ENCODE measurements at regions of chr14 and their contacts with region 1.

Region 1: GRCh38 chr14:70086685-70087379 is 101.9 kb downstream of the SLC8A3 start:
- DNase-seq: no peak
- ATAC-seq: no peak
- H3K4me3 Mint-ChIP-seq: no peak overlapping the region
- H3K27ac Mint-ChIP-seq: no peak overlapping the region
- H3K4me1 Mint-ChIP-seq: no peaks in the 10 kb centered on the region
- H3K27me3 Mint-ChIP-seq: peaks cover 11% of the 10 kb centered on the region
- CTCF ChIP-seq: no peak

Region 2: GRCh38 chr14:68926236-68926635 is 1160.6 kb before region 1 on chr14:
- CTCF ChIA-PET with region 1: no interaction called
- POLR2A ChIA-PET with region 1: no interaction called
- intact Hi-C with region 1: no loop called
- DNase-seq: no peak
- ATAC-seq: no peak
- H3K4me3 Mint-ChIP-seq: no peak overlapping the region
- H3K27ac Mint-ChIP-seq: no peak overlapping the region
- H3K4me1 Mint-ChIP-seq: no peaks in the 10 kb centered on the region
- H3K27me3 Mint-ChIP-seq: peaks cover 33% of the 10 kb centered on the region
- CTCF ChIP-seq: no peak

Region 3: DNA sequence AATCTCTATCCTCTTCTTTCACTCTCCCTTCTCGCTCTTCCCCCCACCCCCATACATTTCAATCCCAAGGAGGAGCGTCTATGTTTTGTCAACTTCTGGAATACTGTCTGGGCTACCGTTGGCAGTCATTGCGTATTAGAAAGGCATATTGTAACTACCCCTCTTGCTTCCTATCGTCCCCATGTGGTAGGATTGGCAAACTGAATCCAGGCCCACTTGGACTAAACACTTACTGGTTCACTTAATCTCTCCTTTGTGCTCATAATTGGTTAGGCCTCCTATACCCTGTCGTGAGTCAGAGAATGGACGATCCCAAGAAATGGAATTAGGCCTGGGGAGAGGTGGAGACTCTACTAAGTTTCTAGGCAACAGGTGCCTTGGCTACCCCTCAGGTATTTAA is 170.7 kb after region 1 on chr14:
- CTCF ChIA-PET with region 1: interaction called, 5 read pairs
- POLR2A ChIA-PET with region 1: no interaction called
- intact Hi-C with region 1: loop called (anchors 1 kb)
- DNase-seq: no peak
- ATAC-seq: no peak
- H3K4me3 Mint-ChIP-seq: no peak overlapping the region
- H3K27ac Mint-ChIP-seq: no peak overlapping the region
- H3K4me1 Mint-ChIP-seq: peaks cover 4% of the 10 kb centered on the region
- H3K27me3 Mint-ChIP-seq: peaks cover 44% of the 10 kb centered on the region
- CTCF ChIP-seq: no peak

Region 4: DNA sequence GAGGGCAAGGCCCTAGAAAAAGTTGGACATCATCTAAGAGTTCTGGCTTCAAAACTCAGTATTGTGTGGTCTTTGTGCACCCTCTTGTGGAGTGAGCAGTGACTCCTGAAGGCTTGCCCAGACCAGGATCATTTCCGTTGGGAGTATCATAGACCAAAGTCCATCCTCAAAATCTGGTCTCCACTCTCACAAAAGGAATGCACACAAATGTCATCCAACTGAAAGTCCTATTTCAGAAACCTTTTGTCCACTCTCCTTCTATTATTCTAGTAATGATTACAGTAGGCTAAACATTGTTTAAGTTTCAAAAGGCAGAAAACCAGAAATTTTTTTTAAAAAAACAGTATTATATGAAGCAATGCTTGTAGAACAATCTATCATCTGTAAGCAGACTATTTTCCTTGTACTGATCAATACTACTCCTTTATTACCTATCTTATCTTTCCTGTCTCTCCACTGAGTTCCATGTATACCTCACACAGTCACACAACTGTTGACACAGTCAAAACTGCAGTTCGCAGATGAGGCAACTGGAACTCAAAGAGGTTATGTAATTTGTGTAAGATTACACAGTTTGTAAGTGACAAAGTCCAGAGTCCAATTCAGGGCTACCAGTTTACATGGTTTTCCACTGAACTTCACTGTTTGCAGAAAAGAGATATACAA is 231.3 kb after region 1 on chr14:
- CTCF ChIA-PET with region 1: interaction called, 3 read pairs
- POLR2A ChIA-PET with region 1: no interaction called
- intact Hi-C with region 1: loop called (anchors 2 kb)
- DNase-seq: no peak
- ATAC-seq: no peak
- H3K4me3 Mint-ChIP-seq: no peak overlapping the region
- H3K27ac Mint-ChIP-seq: no peak overlapping the region
- H3K4me1 Mint-ChIP-seq: no peaks in the 10 kb centered on the region
- H3K27me3 Mint-ChIP-seq: peaks cover 12% of the 10 kb centered on the region
- CTCF ChIP-seq: no peak

Region 5: DNA sequence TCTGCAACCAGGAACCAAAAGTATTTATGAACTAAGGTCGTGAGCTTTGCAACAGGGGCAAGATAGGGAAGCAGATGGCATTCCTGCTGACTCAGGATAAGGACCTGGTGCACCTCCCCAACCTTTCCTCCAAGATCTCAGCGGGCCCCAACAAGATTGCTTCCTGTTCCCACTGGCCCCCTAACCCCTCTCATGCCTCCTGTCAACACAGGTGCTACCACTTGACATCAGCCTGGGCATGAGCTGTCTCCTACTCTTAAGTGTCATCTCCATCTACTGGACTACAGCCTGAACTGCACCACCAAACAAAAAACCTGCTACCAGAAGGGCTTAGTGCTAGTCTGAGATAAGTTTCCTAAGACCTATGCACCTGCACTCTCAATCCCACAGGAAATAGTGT is 481.0 kb after region 1 on chr14:
- CTCF ChIA-PET with region 1: no interaction called
- POLR2A ChIA-PET with region 1: no interaction called
- intact Hi-C with region 1: loop called (anchors 2 kb)
- DNase-seq: no peak
- ATAC-seq: no peak
- H3K4me3 Mint-ChIP-seq: no peak overlapping the region
- H3K27ac Mint-ChIP-seq: no peak overlapping the region
- H3K4me1 Mint-ChIP-seq: peaks cover 2% of the 10 kb centered on the region
- H3K27me3 Mint-ChIP-seq: no peaks in the 10 kb centered on the region
- CTCF ChIP-seq: no peak

Measured in activated B cell treated with CpG ODN at 0.5 μM for 24 hours (primary cell).